CD8-positive, alpha-beta T cell (primary cell): ENCODE measurements at regions of chr2 and their contacts with region 1.

Region 1: GRCh38 chr2:207156451-207157161 is 9.1 kb downstream of the KLF7 start:
- DNase-seq: no peak
- ATAC-seq: no peak
- H3K4me3 ChIP-seq: no peak overlapping the region
- H3K4me3 Mint-ChIP-seq: no peak overlapping the region
- H3K27ac ChIP-seq: no peak overlapping the region
- H3K27ac Mint-ChIP-seq: no peak overlapping the region
- H3K4me1 ChIP-seq: peaks cover 51% of the 10 kb centered on the region
- H3K4me1 Mint-ChIP-seq: peaks cover 82% of the 10 kb centered on the region
- H3K27me3 ChIP-seq: no peaks in the 10 kb centered on the region
- H3K27me3 Mint-ChIP-seq: no peaks in the 10 kb centered on the region
- CTCF ChIP-seq: no peak

Region 2: DNA sequence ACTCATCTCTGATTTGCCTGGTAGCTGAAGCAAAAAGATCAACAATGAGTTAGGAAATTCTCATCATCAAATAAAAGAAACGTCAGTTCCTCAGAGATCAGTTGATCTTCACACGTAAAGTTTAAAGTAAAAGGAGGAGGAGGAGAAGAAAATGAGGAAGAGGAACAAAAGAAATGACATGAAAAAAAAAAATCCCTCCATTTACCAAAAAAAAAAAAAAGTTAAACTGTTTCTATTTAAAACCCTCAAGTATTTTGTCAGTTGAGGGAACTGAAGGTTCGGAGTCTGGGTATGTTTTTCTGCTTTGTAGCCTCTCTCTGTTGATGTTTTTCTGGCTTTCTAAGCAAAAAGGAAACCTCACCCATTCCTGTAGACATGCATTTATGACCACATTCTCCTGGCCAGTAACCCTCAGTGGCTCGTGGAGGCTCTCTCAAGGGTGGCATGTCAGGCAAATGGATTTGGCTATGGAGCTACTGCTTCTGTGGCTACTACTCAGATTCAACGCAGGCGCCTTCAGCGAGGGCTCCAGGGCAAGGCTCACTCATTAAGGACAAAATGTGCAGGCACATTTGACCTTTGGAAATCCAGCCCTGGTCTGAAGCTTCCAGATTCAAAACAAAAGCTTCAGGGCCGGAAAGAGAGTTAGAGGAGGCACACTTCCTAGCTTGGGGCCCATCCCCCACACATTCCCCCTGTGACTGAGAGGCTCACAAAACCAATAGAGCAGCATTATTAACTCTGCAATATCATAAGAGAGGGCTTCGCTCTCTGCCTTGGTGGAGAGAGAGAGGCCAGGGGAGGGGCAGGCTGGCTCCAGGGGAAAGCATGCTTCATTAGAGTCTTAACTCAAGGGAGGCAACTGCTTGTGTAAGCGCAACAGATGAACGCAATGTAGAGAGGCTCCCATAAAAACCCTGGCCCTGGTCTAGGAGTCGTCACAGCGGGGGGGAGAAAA is 13.1 kb before region 1 on chr2:
- CTCF ChIA-PET with region 1: interaction called, 18 read pairs
- POLR2A ChIA-PET with region 1: interaction called, 29 read pairs
- intact Hi-C with region 1: loop called in 1 of 2 experiments (anchors 1 kb)
- DNase-seq: peak; percentile 28 to 80 (median 55)
- ATAC-seq: peak; percentile 66
- H3K4me3 ChIP-seq: peak overlapping the region; percentile 6 to 36
- H3K4me3 Mint-ChIP-seq: peak overlapping the region; percentile 71
- H3K27ac ChIP-seq: peak overlapping the region; percentile 66 to 83
- H3K27ac Mint-ChIP-seq: peak overlapping the region; percentile 91
- H3K4me1 ChIP-seq: peaks cover 40% of the 10 kb centered on the region
- H3K4me1 Mint-ChIP-seq: peaks cover 63% of the 10 kb centered on the region
- H3K27me3 ChIP-seq: no peaks in the 10 kb centered on the region
- H3K27me3 Mint-ChIP-seq: no peaks in the 10 kb centered on the region
- CTCF ChIP-seq: no peak